Activated naive CD4-positive, alpha-beta T cell treated with anti-CD3 and anti-CD28 coated beads for 36 hours (primary cell): ENCODE measurements at regions of chr2 and their contacts with region 1.

Region 1: GRCh38 chr2:242088471-242089212 is 219.1 kb downstream of the RTP5 start:
- DNase-seq: peak; percentile 93
- H3K4me3 Mint-ChIP-seq: peak overlapping the region; percentile 87
- H3K27ac Mint-ChIP-seq: peak overlapping the region; percentile 46
- H3K4me1 Mint-ChIP-seq: peaks cover 34% of the 10 kb centered on the region
- H3K27me3 Mint-ChIP-seq: no peaks in the 10 kb centered on the region

Region 2: GRCh38 chr2:241598480-241598879 is 490.2 kb before region 1 on chr2:
- CTCF ChIA-PET with region 1: no interaction called
- intact Hi-C with region 1: no loop called
- DNase-seq: no peak
- H3K4me3 Mint-ChIP-seq: no peak overlapping the region
- H3K27ac Mint-ChIP-seq: no peak overlapping the region
- H3K4me1 Mint-ChIP-seq: no peaks in the 10 kb centered on the region
- H3K27me3 Mint-ChIP-seq: no peaks in the 10 kb centered on the region

Region 3: GRCh38 chr2:242031481-242032019 is 57.1 kb before region 1 on chr2:
- CTCF ChIA-PET with region 1: no interaction called
- intact Hi-C with region 1: loop called (anchors 5 kb)
- DNase-seq: peak; percentile 76
- H3K4me3 Mint-ChIP-seq: peak overlapping the region; percentile 69
- H3K27ac Mint-ChIP-seq: peak overlapping the region; percentile 11
- H3K4me1 Mint-ChIP-seq: peaks cover 36% of the 10 kb centered on the region
- H3K27me3 Mint-ChIP-seq: no peaks in the 10 kb centered on the region

Region 4: DNA sequence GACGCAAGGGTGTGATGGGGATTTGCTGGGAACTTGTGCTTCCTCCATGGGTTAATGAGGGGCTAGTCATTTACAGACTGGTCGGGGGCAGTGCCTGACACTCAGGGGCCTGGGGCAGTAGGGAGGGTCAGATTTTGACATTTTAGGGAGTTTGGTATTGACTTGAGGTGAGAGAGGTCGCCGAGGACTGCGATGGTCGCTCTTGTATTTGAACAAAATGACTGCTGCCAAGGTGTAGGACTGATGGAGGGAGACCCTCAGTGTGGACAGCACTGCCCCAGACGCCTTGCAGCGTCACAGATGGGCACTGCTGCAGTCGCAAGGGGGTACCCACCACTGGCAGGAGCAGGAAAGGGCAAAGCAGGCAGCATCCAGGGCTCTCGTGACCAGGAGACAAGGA is 36.2 kb before region 1 on chr2:
- CTCF ChIA-PET with region 1: no interaction called
- intact Hi-C with region 1: no loop called
- DNase-seq: no peak
- H3K4me3 Mint-ChIP-seq: no peak overlapping the region
- H3K27ac Mint-ChIP-seq: no peak overlapping the region
- H3K4me1 Mint-ChIP-seq: no peaks in the 10 kb centered on the region
- H3K27me3 Mint-ChIP-seq: peaks cover 5% of the 10 kb centered on the region

Region 5: GRCh38 chr2:242064364-242065250 is 24.0 kb before region 1 on chr2:
- CTCF ChIA-PET with region 1: no interaction called
- intact Hi-C with region 1: no loop called
- DNase-seq: no peak
- H3K4me3 Mint-ChIP-seq: no peak overlapping the region
- H3K27ac Mint-ChIP-seq: no peak overlapping the region
- H3K4me1 Mint-ChIP-seq: no peaks in the 10 kb centered on the region
- H3K27me3 Mint-ChIP-seq: no peaks in the 10 kb centered on the region